Right cardiac atrium (tissue), 5 donors: ENCODE measurements at regions of chr5 and their contacts with region 1.

Region 1: DNA sequence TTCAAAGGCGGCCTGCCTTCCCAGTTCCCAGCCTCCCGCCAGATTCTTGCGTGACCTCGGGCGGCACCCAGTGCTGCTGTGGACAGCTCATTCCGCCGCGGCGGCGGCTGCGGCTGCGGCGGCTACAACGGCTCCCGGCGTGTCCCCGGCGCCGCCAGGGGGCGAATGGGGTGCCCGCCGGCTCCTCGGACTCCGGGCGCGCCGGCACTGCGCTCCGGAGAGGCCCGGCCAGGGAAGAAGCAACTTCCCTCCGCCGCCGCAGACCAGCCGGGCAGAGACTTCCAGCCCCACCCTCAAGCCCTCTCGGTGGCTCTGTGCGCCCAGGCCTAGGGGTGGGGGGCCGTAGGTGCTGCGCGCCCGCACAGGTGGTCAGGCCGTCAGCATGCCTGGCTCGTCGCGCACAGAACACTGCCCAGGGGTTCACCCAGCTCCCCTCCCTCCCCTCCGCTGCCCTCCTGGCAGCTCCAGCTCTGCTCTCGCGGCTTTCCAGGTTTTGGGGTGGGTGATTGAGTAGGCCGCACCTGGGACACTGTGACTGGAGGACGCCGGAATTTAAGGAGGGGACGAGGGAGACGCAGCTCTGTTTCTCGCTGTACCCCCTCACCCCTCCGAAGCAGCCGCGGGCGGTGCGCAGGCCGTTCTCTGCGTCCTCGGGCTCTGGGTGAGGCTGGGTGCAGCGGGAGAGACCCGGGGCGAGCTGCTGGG is 20.2 kb downstream of the IGIP start:
- DNase-seq: peak; percentile 82 to 94 (median 93)
- ATAC-seq: peak; percentile 93 to 94
- H3K4me3 ChIP-seq: peak overlapping the region; percentile 46
- H3K27ac ChIP-seq: no peak overlapping the region
- H3K4me1 ChIP-seq: no peaks in the 10 kb centered on the region
- H3K27me3 ChIP-seq: no peaks in the 10 kb centered on the region

Region 2: GRCh38 chr5:139767960-139768359 is 378.0 kb before region 1 on chr5:
- intact Hi-C with region 1: no loop called
- DNase-seq: peak; percentile 49 to 81 (median 81)
- ATAC-seq: peak in 1 of 2 donors; percentile 12
- H3K4me3 ChIP-seq: no peak overlapping the region
- H3K27ac ChIP-seq: no peak overlapping the region
- H3K4me1 ChIP-seq: peaks cover 5% of the 10 kb centered on the region
- H3K27me3 ChIP-seq: no peaks in the 10 kb centered on the region

Region 3: GRCh38 chr5:140073296-140073695 is 72.7 kb before region 1 on chr5:
- intact Hi-C with region 1: loop called in 1 of 4 experiments (anchors 5 kb)
- DNase-seq: no peak
- ATAC-seq: no peak
- H3K4me3 ChIP-seq: no peak overlapping the region
- H3K27ac ChIP-seq: no peak overlapping the region
- H3K4me1 ChIP-seq: no peaks in the 10 kb centered on the region
- H3K27me3 ChIP-seq: no peaks in the 10 kb centered on the region

Region 4: GRCh38 chr5:140084541-140084940 is 61.4 kb before region 1 on chr5:
- intact Hi-C with region 1: loop called in 2 of 4 experiments (anchors 5 kb)
- DNase-seq: peak in 2 of 3 donors; percentile 15 to 43
- ATAC-seq: peak; percentile 62 to 64
- H3K4me3 ChIP-seq: no peak overlapping the region
- H3K27ac ChIP-seq: no peak overlapping the region
- H3K4me1 ChIP-seq: no peaks in the 10 kb centered on the region
- H3K27me3 ChIP-seq: no peaks in the 10 kb centered on the region

Region 5: GRCh38 chr5:140113699-140114263 is 32.2 kb before region 1 on chr5 and contains the start of gene PURA:
- intact Hi-C with region 1: loop called in 1 of 4 experiments (anchors 5 kb)
- DNase-seq: peak; percentile 96 to 98 (median 98)
- ATAC-seq: peak; percentile 96 to 97
- H3K4me3 ChIP-seq: peak within 1 kb of the TSS; percentile 77
- H3K27ac ChIP-seq: peak within 1 kb of the TSS; percentile 92
- H3K4me1 ChIP-seq: peaks cover 5% of the 10 kb centered on the region
- H3K27me3 ChIP-seq: no peaks in the 10 kb centered on the region
- total RNA-seq, gene PURA: 25.7 to 37.1 (median 32.9) TPM